ENCODE measurements at regions of chr3 and their contacts with region 1.

Region 1: GRCh38 chr3:39126532-39127071 is 19.1 kb downstream of the TTC21A start:
- DNase-seq: peak; percentile 57
- H3K4me3 Mint-ChIP-seq: no peak overlapping the region
- H3K27ac Mint-ChIP-seq: peak overlapping the region; percentile 39
- H3K4me1 Mint-ChIP-seq: peaks cover 32% of the 10 kb centered on the region
- H3K27me3 Mint-ChIP-seq: peaks cover 20% of the 10 kb centered on the region

Region 2: DNA sequence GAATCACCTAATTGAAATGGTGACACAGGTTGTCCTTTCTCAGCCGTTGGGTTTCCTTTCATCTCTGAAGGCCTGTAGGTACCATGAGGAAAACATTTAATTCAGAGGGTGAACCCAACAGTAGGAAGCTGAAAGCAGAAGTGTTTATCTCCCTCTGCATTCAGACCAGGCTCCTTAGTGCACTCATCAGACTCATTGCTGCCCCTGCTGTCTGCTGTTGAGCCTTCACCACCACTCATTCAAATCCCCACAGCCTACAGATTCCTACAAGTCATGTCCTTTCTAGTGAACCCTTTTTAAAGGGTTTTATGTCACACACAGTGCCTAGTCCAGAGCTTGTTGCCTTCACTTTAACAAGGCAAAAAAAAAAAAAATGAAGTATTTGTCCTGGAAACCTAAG is 61.4 kb before region 1 on chr3:
- CTCF ChIA-PET with region 1: no interaction called
- DNase-seq: peak; percentile 42
- H3K4me3 Mint-ChIP-seq: no peak overlapping the region
- H3K27ac Mint-ChIP-seq: no peak overlapping the region
- H3K4me1 Mint-ChIP-seq: peaks cover 8% of the 10 kb centered on the region
- H3K27me3 Mint-ChIP-seq: no peaks in the 10 kb centered on the region

Region 3: GRCh38 chr3:39146984-39147591 is 20.5 kb after region 1 on chr3:
- CTCF ChIA-PET with region 1: interaction called, 10 read pairs
- DNase-seq: peak; percentile 80
- H3K4me3 Mint-ChIP-seq: peak overlapping the region; percentile 82
- H3K27ac Mint-ChIP-seq: peak overlapping the region; percentile 97
- H3K4me1 Mint-ChIP-seq: peaks cover 81% of the 10 kb centered on the region
- H3K27me3 Mint-ChIP-seq: no peaks in the 10 kb centered on the region

Region 4: GRCh38 chr3:40019376-40019775 is 892.8 kb after region 1 on chr3:
- CTCF ChIA-PET with region 1: no interaction called
- DNase-seq: no peak
- H3K4me3 Mint-ChIP-seq: no peak overlapping the region
- H3K27ac Mint-ChIP-seq: no peak overlapping the region
- H3K4me1 Mint-ChIP-seq: no peaks in the 10 kb centered on the region
- H3K27me3 Mint-ChIP-seq: no peaks in the 10 kb centered on the region

Measured in activated naive CD4-positive, alpha-beta T cell treated with anti-CD3 and anti-CD28 coated beads, Interleukin-2, amount 10 ng/mL, durations not matched to agents 7 days and 5 days (primary cell).